Sigmoid colon (tissue), 7 donors: ENCODE measurements at regions of chr21 and their contacts with region 1.

Region 1: GRCh38 chr21:17903029-17903806 is 84.1 kb upstream of the C21orf91 start:
- DNase-seq: no peak
- H3K4me3 ChIP-seq: no peak overlapping the region
- H3K27ac ChIP-seq: no peak overlapping the region
- H3K4me1 ChIP-seq: no peaks in the 10 kb centered on the region
- H3K27me3 ChIP-seq: no peaks in the 10 kb centered on the region
- CTCF ChIP-seq: no peak
- EP300 ChIP-seq: no peak
- POLR2A ChIP-seq: no peak

Region 2: GRCh38 chr21:17679002-17679600 is 224.1 kb before region 1 on chr21:
- intact Hi-C with region 1: loop called (anchors 1 kb)
- DNase-seq: no peak
- H3K4me3 ChIP-seq: no peak overlapping the region
- H3K27ac ChIP-seq: no peak overlapping the region
- H3K4me1 ChIP-seq: no peaks in the 10 kb centered on the region
- H3K27me3 ChIP-seq: no peaks in the 10 kb centered on the region
- CTCF ChIP-seq: peak; percentile 56 to 75 (median 70)
- EP300 ChIP-seq: no peak
- POLR2A ChIP-seq: no peak

Region 3: DNA sequence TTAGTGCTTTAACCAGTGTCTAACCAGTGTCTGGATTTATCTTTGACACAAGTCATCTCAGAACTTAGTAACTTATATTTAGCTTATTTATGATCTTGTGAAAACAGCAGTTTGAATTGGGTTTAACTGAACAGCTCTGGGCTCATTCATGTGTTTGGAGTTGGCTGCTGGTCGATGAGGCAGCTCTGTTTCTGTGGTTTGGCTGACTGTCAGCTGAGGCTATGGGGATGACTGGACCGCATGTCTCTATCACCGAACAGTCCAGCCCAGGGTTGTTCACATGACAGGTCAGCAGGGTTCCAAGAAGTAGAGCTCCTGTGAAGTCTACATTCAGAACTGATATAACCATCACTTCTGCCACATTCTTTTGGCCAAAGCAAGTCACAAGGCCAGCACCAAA is 55.0 kb before region 1 on chr21:
- intact Hi-C with region 1: loop called (anchors 10 kb)
- DNase-seq: peak; percentile 64
- H3K4me3 ChIP-seq: no peak overlapping the region
- H3K27ac ChIP-seq: peak overlapping the region in 2 of 4 donors; percentile 25 to 69
- H3K4me1 ChIP-seq: peaks cover 0 to 17% (median 5%) of the 10 kb centered on the region in 4 donors
- H3K27me3 ChIP-seq: no peaks in the 10 kb centered on the region
- CTCF ChIP-seq: no peak
- EP300 ChIP-seq: no peak
- POLR2A ChIP-seq: no peak